ENCODE measurements at regions of chr7 and their contacts with region 1.

Region 1: GRCh38 chr7:139777948-139778841 is at the start of gene HIPK2:
- DNase-seq: peak; percentile 87
- H3K4me3 ChIP-seq: peak within 1 kb of the TSS; percentile 75 to 76
- H3K27ac ChIP-seq: peak within 1 kb of the TSS; percentile 86 to 95
- H3K4me1 ChIP-seq: peaks cover 11% of the 10 kb centered on the region
- H3K27me3 ChIP-seq: no peaks in the 10 kb centered on the region
- CTCF ChIP-seq: no peak
- POLR2A ChIP-seq: no peak
- total RNA-seq, gene HIPK2: 17.8 to 22.4 TPM

Region 2: DNA sequence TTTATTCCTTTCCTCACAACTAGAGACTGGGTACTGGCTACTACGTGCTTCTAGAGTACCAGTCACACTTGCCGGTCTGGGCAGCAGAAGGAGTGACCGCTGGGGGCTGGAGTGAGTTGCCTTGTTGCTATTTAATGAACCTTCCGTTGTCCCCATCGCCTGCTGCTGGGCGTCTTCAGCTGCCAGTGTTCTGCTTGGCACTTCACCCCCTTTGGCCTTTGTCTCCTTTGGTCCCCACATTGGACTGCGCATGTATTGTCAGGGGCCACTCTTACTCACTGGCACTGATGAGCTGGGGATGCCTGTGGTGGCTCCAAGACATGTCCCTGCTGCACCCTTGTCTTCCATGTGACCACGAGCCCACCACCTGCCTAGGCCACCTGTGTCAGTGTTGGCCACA is 144.1 kb before region 1 on chr7:
- intact Hi-C with region 1: no loop called
- DNase-seq: no peak
- H3K4me3 ChIP-seq: no peak overlapping the region
- H3K27ac ChIP-seq: no peak overlapping the region
- H3K4me1 ChIP-seq: peaks cover 6% of the 10 kb centered on the region
- H3K27me3 ChIP-seq: no peaks in the 10 kb centered on the region
- CTCF ChIP-seq: no peak
- POLR2A ChIP-seq: no peak

Region 3: GRCh38 chr7:139645572-139646523 is 132.3 kb before region 1 on chr7:
- intact Hi-C with region 1: loop called (anchors 10 kb)
- DNase-seq: peak; percentile 88
- H3K4me3 ChIP-seq: no peak overlapping the region
- H3K27ac ChIP-seq: no peak overlapping the region
- H3K4me1 ChIP-seq: no peaks in the 10 kb centered on the region
- H3K27me3 ChIP-seq: no peaks in the 10 kb centered on the region
- CTCF ChIP-seq: peak; percentile 81 to 94 (median 87)
- POLR2A ChIP-seq: no peak

Region 4: GRCh38 chr7:140003913-140004382 is 225.8 kb after region 1 on chr7:
- intact Hi-C with region 1: loop called (anchors 10 kb)
- DNase-seq: peak; percentile 30
- H3K4me3 ChIP-seq: no peak overlapping the region
- H3K27ac ChIP-seq: no peak overlapping the region
- H3K4me1 ChIP-seq: no peaks in the 10 kb centered on the region
- H3K27me3 ChIP-seq: no peaks in the 10 kb centered on the region
- CTCF ChIP-seq: peak in 2 of 3 experiments; percentile 40 to 54
- POLR2A ChIP-seq: no peak

Region 5: GRCh38 chr7:140260352-140261104 is 482.3 kb after region 1 on chr7:
- intact Hi-C with region 1: no loop called
- DNase-seq: no peak
- H3K4me3 ChIP-seq: no peak overlapping the region
- H3K27ac ChIP-seq: no peak overlapping the region
- H3K4me1 ChIP-seq: no peaks in the 10 kb centered on the region
- H3K27me3 ChIP-seq: no peaks in the 10 kb centered on the region
- CTCF ChIP-seq: no peak
- POLR2A ChIP-seq: no peak

Region 6: DNA sequence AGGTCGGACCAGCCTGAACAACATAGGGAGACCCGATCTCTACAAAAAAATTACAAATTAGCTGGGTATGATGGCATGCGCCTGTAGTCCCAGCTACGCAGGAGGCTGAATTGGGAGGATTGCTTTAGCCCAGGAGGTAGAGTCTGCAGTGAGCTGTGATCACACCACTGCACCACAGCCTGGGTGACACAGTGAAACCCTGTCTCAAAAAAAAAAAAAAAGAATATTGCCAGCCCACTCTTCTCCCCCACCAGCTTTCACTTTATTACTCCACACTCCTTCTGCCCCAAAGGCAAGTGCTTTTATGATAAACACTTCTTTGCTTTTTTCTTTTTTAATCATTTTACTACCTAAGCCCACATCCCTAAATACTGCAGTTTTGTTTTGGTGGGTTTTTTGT is 640.5 kb after region 1 on chr7:
- intact Hi-C with region 1: no loop called
- DNase-seq: no peak
- H3K4me3 ChIP-seq: no peak overlapping the region
- H3K27ac ChIP-seq: no peak overlapping the region
- H3K4me1 ChIP-seq: no peaks in the 10 kb centered on the region
- H3K27me3 ChIP-seq: no peaks in the 10 kb centered on the region
- CTCF ChIP-seq: no peak
- POLR2A ChIP-seq: no peak

Measured in testis (tissue), 5 donors.